Caco-2 (cell line): ENCODE measurements at regions of chr6 and their contacts with region 1.

Region 1: GRCh38 chr6:29752451-29753308 is 29.4 kb downstream of the HLA-F start:
- DNase-seq: peak; percentile 77 to 86
- H3K4me3 ChIP-seq: peak overlapping the region; percentile 40
- H3K4me3 Mint-ChIP-seq: peak overlapping the region; percentile 76
- H3K27ac Mint-ChIP-seq: no peak overlapping the region
- H3K4me1 ChIP-seq: 0 out of 2 replicates have a peak, but pooled peaks cover 5% of the 10 kb centered on the region
- H3K4me1 Mint-ChIP-seq: peaks cover 6% of the 10 kb centered on the region
- H3K27me3 ChIP-seq: no peaks in the 10 kb centered on the region
- H3K27me3 Mint-ChIP-seq: peaks cover 10% of the 10 kb centered on the region
- CTCF ChIP-seq: peak; percentile 91 to 100

Region 2: GRCh38 chr6:29649701-29650673 is 102.7 kb before region 1 on chr6:
- CTCF ChIA-PET with region 1: interaction called, 8 read pairs
- POLR2A ChIA-PET with region 1: no interaction called
- intact Hi-C with region 1: loop called (anchors 2 kb)
- DNase-seq: peak; percentile 95 to 96
- H3K4me3 ChIP-seq: peak overlapping the region; percentile 41
- H3K4me3 Mint-ChIP-seq: peak overlapping the region; percentile 76
- H3K27ac Mint-ChIP-seq: peak overlapping the region; percentile 63
- H3K4me1 ChIP-seq: 0 out of 2 replicates have a peak, but pooled peaks cover 3% of the 10 kb centered on the region
- H3K4me1 Mint-ChIP-seq: peaks cover 7% of the 10 kb centered on the region
- H3K27me3 ChIP-seq: no peaks in the 10 kb centered on the region
- H3K27me3 Mint-ChIP-seq: no peaks in the 10 kb centered on the region
- CTCF ChIP-seq: peak; percentile 69 to 91

Region 3: GRCh38 chr6:29705389-29706231 is 47.1 kb before region 1 on chr6:
- CTCF ChIA-PET with region 1: no interaction called
- POLR2A ChIA-PET with region 1: no interaction called
- intact Hi-C with region 1: loop called (anchors 1 kb)
- DNase-seq: peak in 1 of 2 experiments; percentile 58
- H3K4me3 ChIP-seq: no peak overlapping the region
- H3K4me3 Mint-ChIP-seq: no peak overlapping the region
- H3K27ac Mint-ChIP-seq: no peak overlapping the region
- H3K4me1 ChIP-seq: no peaks in the 10 kb centered on the region
- H3K4me1 Mint-ChIP-seq: no peaks in the 10 kb centered on the region
- H3K27me3 ChIP-seq: no peaks in the 10 kb centered on the region
- H3K27me3 Mint-ChIP-seq: peaks cover 13% of the 10 kb centered on the region
- CTCF ChIP-seq: peak; percentile 62 to 63

Region 4: GRCh38 chr6:29737707-29738630 is 14.7 kb before region 1 on chr6:
- CTCF ChIA-PET with region 1: interaction called, 10 read pairs
- POLR2A ChIA-PET with region 1: no interaction called
- intact Hi-C with region 1: loop called (anchors 1 kb)
- DNase-seq: peak; percentile 66 to 72
- H3K4me3 ChIP-seq: no peak overlapping the region
- H3K4me3 Mint-ChIP-seq: no peak overlapping the region
- H3K27ac Mint-ChIP-seq: no peak overlapping the region
- H3K4me1 ChIP-seq: no peaks in the 10 kb centered on the region
- H3K4me1 Mint-ChIP-seq: no peaks in the 10 kb centered on the region
- H3K27me3 ChIP-seq: no peaks in the 10 kb centered on the region
- H3K27me3 Mint-ChIP-seq: peaks cover 3% of the 10 kb centered on the region
- CTCF ChIP-seq: peak; percentile 75 to 81

Region 5: GRCh38 chr6:29834564-29835436 is 82.1 kb after region 1 on chr6:
- CTCF ChIA-PET with region 1: no interaction called
- POLR2A ChIA-PET with region 1: no interaction called
- intact Hi-C with region 1: loop called (anchors 5 kb)
- DNase-seq: peak in 1 of 2 experiments; percentile 47
- H3K4me3 ChIP-seq: no peak overlapping the region
- H3K4me3 Mint-ChIP-seq: no peak overlapping the region
- H3K27ac Mint-ChIP-seq: no peak overlapping the region
- H3K4me1 ChIP-seq: no peaks in the 10 kb centered on the region
- H3K4me1 Mint-ChIP-seq: peaks cover 10% of the 10 kb centered on the region
- H3K27me3 ChIP-seq: no peaks in the 10 kb centered on the region
- H3K27me3 Mint-ChIP-seq: peaks cover 19% of the 10 kb centered on the region
- CTCF ChIP-seq: peak; percentile 73 to 84

Region 6: DNA sequence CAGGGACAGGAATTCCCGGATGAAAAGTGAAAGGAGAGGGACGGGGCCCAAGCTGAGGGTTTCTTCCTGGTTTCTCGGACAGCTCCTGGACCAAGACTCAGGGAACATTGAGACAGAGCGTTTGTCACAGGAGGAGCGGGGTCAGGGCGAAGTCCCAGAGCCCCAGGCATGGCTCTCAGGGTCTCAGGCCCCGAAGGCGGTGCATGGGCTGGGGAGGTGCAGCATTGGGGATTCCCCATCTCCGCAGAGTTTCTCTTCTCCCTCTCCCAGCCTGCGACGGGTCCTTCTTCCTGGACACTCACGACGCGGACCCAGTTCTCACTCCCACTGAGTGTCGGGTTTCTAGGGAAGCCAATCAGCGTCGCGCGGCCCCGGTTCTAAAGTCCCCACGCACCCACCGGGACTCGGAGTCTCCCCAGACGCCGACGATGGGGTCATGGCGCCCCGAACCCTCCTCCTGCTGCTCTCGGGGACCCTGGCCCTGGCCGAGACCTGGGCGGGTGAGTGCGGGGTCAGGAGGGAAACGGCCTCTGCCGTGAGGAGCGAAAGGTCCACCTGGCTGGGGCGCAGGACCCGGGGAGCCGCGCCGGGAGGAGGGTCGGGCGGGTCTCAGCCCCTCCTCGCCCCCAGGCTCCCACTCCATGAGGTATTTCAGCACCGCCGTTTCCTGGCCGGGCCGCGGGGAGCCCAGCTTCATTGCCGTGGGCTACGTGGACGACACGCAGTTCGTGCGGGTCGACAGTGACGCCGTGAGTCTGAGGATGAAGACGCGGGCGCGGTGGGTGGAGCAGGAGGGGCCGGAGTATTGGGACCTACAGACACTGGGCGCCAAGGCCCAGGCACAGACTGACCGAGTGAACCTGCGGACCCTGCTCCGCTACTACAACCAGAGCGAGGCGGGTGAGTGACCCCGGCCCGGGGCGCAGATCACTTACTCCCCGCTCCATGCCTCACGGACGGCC is 253.8 kb after region 1 on chr6:
- CTCF ChIA-PET with region 1: no interaction called
- POLR2A ChIA-PET with region 1: no interaction called
- intact Hi-C with region 1: loop called (anchors 10 kb)
- DNase-seq: peak in 1 of 2 experiments; percentile 8
- H3K4me3 ChIP-seq: peak overlapping the region; percentile 36
- H3K4me3 Mint-ChIP-seq: peak overlapping the region; percentile 72
- H3K27ac Mint-ChIP-seq: no peak overlapping the region
- H3K4me1 ChIP-seq: 0 out of 2 replicates have a peak, but pooled peaks cover 11% of the 10 kb centered on the region
- H3K4me1 Mint-ChIP-seq: no peaks in the 10 kb centered on the region
- H3K27me3 ChIP-seq: peaks cover 1% of the 10 kb centered on the region; the same call in 1 of the 2 replicates
- H3K27me3 Mint-ChIP-seq: peaks cover 3% of the 10 kb centered on the region
- CTCF ChIP-seq: no peak